ENCODE measurements at regions of chr1 and their contacts with region 1.

Region 1: GRCh38 chr1:236534151-236534651 is 10.4 kb downstream of the LGALS8 start:
- DNase-seq: no peak
- ATAC-seq: no peak
- H3K4me3 ChIP-seq: no peak overlapping the region
- H3K27ac ChIP-seq: no peak overlapping the region
- H3K4me1 ChIP-seq: peaks cover 63% of the 10 kb centered on the region
- H3K27me3 ChIP-seq: no peaks in the 10 kb centered on the region
- CTCF ChIP-seq: no peak
- EP300 ChIP-seq: no peak
- POLR2A ChIP-seq: no peak
- RAD21 ChIP-seq: no peak

Region 2: DNA sequence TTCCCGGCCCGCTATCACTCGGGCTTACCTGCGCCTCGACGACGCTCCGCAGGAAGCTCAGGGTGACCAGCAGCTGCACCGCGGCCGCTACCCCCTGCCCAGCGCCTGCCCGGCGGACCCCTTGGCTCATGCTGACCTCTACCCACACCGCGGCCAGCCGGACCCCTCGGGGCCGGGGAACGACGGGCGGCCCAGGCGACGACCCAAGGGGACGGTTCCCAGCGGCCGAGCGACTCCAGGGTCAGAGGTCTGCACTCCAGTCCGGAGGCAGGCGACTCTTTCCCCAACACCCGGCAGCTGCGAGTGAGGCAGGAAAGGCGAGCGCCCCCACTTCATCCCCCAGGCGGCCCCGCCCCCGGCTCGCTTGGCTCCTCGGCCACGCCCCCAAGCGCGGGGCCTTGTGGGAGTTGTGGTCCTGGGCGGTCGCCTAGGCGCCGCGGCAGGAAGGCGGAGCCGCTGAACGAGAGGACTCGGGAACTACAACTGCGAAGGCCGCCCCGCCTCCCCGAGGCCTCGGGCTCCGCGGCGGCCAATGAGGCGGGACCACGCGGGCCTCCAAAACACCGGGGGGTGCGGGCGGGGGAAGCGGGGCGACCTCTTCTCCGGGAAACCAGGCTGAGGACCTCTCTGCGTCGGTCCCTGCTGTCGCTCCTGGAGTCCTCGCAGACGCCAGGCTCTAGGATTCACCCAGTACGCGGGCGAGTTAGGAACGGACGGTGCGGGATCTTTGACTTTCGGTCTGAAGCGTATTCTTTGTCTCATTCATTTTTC is 252.4 kb before region 1 on chr1 and contains the start of gene ERO1B:
- CTCF ChIA-PET with region 1: no interaction called
- POLR2A ChIA-PET with region 1: no interaction called
- in situ Hi-C with region 1: no loop called
- intact Hi-C with region 1: loop called (anchors 5 kb)
- DNase-seq: peak; percentile 89
- ATAC-seq: peak; percentile 97
- H3K4me3 ChIP-seq: peak within 1 kb of the TSS; percentile 61 to 90 (median 85)
- H3K27ac ChIP-seq: no peak within 1 kb of the TSS
- H3K4me1 ChIP-seq: peaks cover 17% of the 10 kb centered on the region
- H3K27me3 ChIP-seq: peaks cover 4 to 22% of the 10 kb centered on the region in 2 experiments; a peak in 3 of 5 replicates
- CTCF ChIP-seq: peak; percentile 51
- EP300 ChIP-seq: no peak
- POLR2A ChIP-seq: peak; percentile 75 to 88
- RAD21 ChIP-seq: no peak
- total RNA-seq, gene ERO1B: 0.86 and 1.6 TPM in 2 replicates

Measured in HepG2 (cell line).